ENCODE measurements at regions of chr17 and their contacts with region 1.

Region 1: GRCh38 chr17:44623070-44623725 is 33.1 kb upstream of the MEIOC start:
- DNase-seq: peak in 1 of 2 experiments; percentile 49
- ATAC-seq: peak; percentile 58 to 72; a peak in 3 of 6 replicates
- H3K4me3 ChIP-seq: no peak overlapping the region
- H3K27ac ChIP-seq: peak overlapping the region in 1 of 2 experiments; percentile 15; a peak in 1 of 6 replicates
- H3K4me1 ChIP-seq: no peaks in the 10 kb centered on the region
- CTCF ChIP-seq: peak; percentile 30; the same call in 1 of the 3 replicates
- EP300 ChIP-seq: no peak
- POLR2A ChIP-seq: no peak
- RAD21 ChIP-seq: peak in 1 of 2 experiments; percentile 50; a peak in 2 of 5 replicates

Region 2: GRCh38 chr17:44607836-44608690 is 15.1 kb before region 1 on chr17:
- CTCF ChIA-PET with region 1: interaction called, 22 read pairs
- POLR2A ChIA-PET with region 1: no interaction called
- DNase-seq: no peak
- ATAC-seq: no peak; a peak in 2 of 6 replicates
- H3K4me3 ChIP-seq: no peak overlapping the region
- H3K27ac ChIP-seq: peak overlapping the region; percentile 44 to 81; a peak in 4 of 6 replicates
- H3K4me1 ChIP-seq: peaks cover 11% of the 10 kb centered on the region
- CTCF ChIP-seq: no peak
- EP300 ChIP-seq: no peak
- POLR2A ChIP-seq: no peak
- RAD21 ChIP-seq: no peak

Region 3: DNA sequence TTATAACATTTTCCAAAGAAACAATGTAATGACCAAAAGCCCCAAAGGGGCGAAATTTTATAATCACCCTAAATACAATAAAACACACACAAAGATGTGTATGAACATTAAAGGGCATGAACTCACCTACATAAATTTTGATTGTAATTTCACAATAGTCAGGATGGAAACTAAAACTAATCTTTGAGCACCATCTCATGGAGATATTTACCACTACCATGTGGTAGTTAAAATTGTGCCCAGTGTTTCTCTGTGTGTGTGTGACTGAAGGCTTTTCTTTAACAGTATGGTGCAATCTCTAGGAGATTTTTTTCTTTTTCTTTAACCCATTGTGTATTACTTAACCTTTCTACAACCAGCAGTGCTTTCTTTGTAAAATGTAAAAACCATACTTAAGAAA is 13.4 kb after region 1 on chr17:
- CTCF ChIA-PET with region 1: interaction called, 10 read pairs
- POLR2A ChIA-PET with region 1: no interaction called
- DNase-seq: peak; percentile 67 to 69
- ATAC-seq: peak; percentile 88 to 94
- H3K4me3 ChIP-seq: no peak overlapping the region
- H3K27ac ChIP-seq: peak overlapping the region in 1 of 2 experiments; percentile 1; a peak in 1 of 6 replicates
- H3K4me1 ChIP-seq: peaks cover 22% of the 10 kb centered on the region
- CTCF ChIP-seq: peak; percentile 97
- EP300 ChIP-seq: no peak
- POLR2A ChIP-seq: no peak
- RAD21 ChIP-seq: peak; percentile 99

Region 4: GRCh38 chr17:44708401-44709181 is 85.4 kb after region 1 on chr17 and contains the start of gene DBF4B:
- CTCF ChIA-PET with region 1: no interaction called
- POLR2A ChIA-PET with region 1: no interaction called
- DNase-seq: peak; percentile 95 to 99
- ATAC-seq: peak; percentile 86 to 91
- H3K4me3 ChIP-seq: peak within 1 kb of the TSS; percentile 86
- H3K27ac ChIP-seq: peak within 1 kb of the TSS; percentile 71 to 85
- H3K4me1 ChIP-seq: peaks cover 15% of the 10 kb centered on the region
- CTCF ChIP-seq: no peak
- EP300 ChIP-seq: no peak
- POLR2A ChIP-seq: peak; percentile 57
- RAD21 ChIP-seq: no peak
- polyA plus RNA-seq, gene DBF4B: 16.5 and 16.9 TPM in 2 replicates

Region 5: DNA sequence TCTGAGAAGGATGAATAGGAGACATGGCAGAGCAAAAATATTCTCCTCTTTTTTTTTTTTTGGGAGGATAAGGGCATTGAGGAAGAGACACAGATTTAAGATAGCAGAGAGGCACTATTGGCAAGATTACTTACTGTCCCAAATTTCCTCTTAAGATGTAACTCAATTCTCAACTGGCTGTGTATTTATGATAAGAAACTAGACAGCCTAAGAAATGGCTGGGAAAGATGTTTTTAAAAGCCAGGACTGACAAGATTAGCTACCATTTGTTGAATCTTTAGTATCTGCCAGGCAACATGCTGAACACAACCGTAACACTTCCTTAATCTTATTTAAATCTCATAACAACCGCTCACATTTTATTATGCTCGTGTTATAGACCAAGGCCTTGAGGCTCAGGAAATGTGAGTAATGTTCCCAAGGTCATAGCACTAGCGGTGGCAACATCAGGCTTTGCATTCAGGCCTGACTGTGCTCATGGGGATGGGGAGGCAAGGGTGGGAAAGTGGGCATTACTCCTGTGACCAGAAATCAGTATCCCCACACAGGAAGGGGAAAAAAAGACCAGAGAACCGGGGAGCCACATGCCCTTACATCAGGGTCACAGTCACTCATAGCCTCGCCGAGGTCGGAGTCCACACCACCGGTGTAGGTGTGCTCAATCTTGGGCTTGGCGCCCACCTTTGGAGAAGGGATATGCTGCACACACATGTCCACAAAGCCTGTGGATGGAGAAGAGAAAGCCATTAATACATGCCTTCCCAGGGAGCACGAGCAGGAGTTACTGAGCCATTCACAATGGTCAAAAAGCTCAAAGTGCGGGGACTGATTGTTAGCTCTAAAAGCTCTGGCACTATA is 240.1 kb after region 1 on chr17:
- CTCF ChIA-PET with region 1: no interaction called
- POLR2A ChIA-PET with region 1: no interaction called
- DNase-seq: no peak
- ATAC-seq: no peak
- H3K4me3 ChIP-seq: no peak overlapping the region
- H3K27ac ChIP-seq: no peak overlapping the region
- H3K4me1 ChIP-seq: no peaks in the 10 kb centered on the region
- CTCF ChIP-seq: no peak
- EP300 ChIP-seq: no peak
- POLR2A ChIP-seq: no peak
- RAD21 ChIP-seq: no peak

Measured in A549 (cell line).